ENCODE measurements at regions of chr2 and their contacts with region 1.

Region 1: GRCh38 chr2:145744541-145745386 is 1224.8 kb upstream of the ZEB2 start:
- DNase-seq: peak; percentile 95
- ATAC-seq: peak; percentile 98
- H3K4me3 ChIP-seq: no peak overlapping the region
- H3K27ac ChIP-seq: no peak overlapping the region
- H3K4me1 ChIP-seq: peaks cover 4% of the 10 kb centered on the region; the same call in 1 of the 2 replicates
- H3K27me3 ChIP-seq: no peaks in the 10 kb centered on the region
- CTCF ChIP-seq: no peak
- POLR2A ChIP-seq: no peak
- RAD21 ChIP-seq: peak; percentile 28

Region 2: DNA sequence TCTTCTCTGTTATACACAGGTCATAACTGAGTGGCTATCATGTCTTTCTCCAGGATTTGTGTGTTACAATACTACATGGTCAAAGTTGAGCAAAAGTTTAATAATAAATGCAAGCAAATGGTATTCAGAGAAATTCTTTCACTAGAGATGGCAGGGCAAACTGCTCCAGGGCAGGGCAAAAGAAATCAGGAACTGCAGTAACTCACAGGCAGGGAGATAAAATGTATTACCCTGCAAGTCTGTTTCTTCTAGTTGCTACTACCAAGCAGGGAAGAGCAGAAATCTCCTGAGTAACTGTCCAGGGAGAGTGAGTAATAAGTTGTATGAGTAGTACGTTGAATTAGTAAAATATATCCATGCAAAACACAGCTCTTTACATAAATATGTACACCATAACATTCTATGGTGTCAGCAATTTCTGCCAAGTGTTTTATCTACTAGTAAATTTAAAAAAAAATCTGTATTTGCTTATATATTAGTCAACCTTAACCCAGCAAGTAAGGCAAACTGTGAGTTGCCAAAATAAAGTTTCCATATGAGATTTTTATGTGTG is 1628.9 kb before region 1 on chr2:
- CTCF ChIA-PET with region 1: interaction called, 11 read pairs
- POLR2A ChIA-PET with region 1: no interaction called
- dilution Hi-C with region 1: no loop called
- in situ Hi-C with region 1: no loop called
- intact Hi-C with region 1: no loop called
- DNase-seq: peak; percentile 69
- ATAC-seq: peak; percentile 63; the same call in 1 of the 2 replicates
- H3K4me3 ChIP-seq: no peak overlapping the region
- H3K27ac ChIP-seq: no peak overlapping the region
- H3K4me1 ChIP-seq: peaks cover 3% of the 10 kb centered on the region
- H3K27me3 ChIP-seq: no peaks in the 10 kb centered on the region
- CTCF ChIP-seq: no peak
- POLR2A ChIP-seq: no peak
- RAD21 ChIP-seq: no peak

Region 3: GRCh38 chr2:144834998-144835633 is 909.6 kb before region 1 on chr2:
- CTCF ChIA-PET with region 1: no interaction called
- POLR2A ChIA-PET with region 1: interaction called, 14 read pairs
- dilution Hi-C with region 1: no loop called
- in situ Hi-C with region 1: no loop called
- intact Hi-C with region 1: no loop called
- DNase-seq: peak; percentile 88
- ATAC-seq: peak; percentile 79
- H3K4me3 ChIP-seq: peak overlapping the region; percentile 6; the same call in 1 of the 2 replicates
- H3K27ac ChIP-seq: peak overlapping the region; percentile 61
- H3K4me1 ChIP-seq: peaks cover 12% of the 10 kb centered on the region
- H3K27me3 ChIP-seq: no peaks in the 10 kb centered on the region
- CTCF ChIP-seq: no peak
- POLR2A ChIP-seq: no peak
- RAD21 ChIP-seq: peak; percentile 1; the same call in 1 of the 2 replicates

Region 4: DNA sequence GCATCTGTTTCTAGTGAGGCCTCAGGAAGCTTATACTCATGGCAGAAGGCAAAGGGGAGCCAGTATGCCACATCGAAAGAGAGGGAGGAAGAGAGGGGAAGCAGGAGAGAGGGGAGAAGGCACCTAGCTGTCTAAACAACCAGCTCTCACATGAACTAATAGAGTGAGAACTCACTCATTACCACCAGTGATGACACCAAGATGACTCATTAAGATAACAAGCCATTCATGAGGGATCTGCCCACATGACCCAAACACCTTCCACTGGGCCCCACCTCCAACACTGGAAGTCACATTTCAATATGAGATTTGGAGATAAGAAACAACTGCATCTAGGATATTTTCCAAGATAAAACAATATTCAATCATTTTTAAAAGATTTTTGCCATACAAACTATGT is 470.9 kb before region 1 on chr2:
- CTCF ChIA-PET with region 1: no interaction called
- POLR2A ChIA-PET with region 1: no interaction called
- dilution Hi-C with region 1: no loop called
- in situ Hi-C with region 1: no loop called
- intact Hi-C with region 1: no loop called
- DNase-seq: no peak
- ATAC-seq: no peak
- H3K4me3 ChIP-seq: no peak overlapping the region
- H3K27ac ChIP-seq: no peak overlapping the region
- H3K4me1 ChIP-seq: no peaks in the 10 kb centered on the region
- H3K27me3 ChIP-seq: no peaks in the 10 kb centered on the region
- CTCF ChIP-seq: no peak
- POLR2A ChIP-seq: no peak
- RAD21 ChIP-seq: no peak